ENCODE measurements at regions of chr12 and their contacts with region 1.

Region 1: DNA sequence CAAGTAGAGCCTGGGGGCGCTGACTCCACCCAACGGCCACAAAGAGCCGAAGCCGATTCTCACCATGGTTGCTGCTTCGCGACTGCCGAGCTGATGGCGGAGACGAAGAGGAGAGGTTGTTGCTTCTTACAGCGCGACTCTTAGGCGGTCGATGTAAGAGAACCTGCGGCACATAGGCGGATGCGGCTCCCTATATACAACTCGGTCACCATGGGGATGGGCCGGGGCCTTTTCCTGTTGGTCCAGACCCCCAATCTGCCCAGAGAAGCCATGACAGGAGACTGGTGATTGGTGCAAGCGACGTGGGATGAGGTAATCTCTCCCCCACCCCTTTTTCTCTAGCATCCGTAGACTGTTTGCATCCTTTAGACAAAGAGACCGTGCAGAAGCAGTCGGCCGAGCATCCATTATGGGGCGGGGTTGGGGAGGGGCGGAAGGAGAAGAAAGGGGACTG is at the start of gene TUBA1A:
- DNase-seq: peak; percentile 87
- ATAC-seq: peak; percentile 90
- H3K4me3 Mint-ChIP-seq: peak within 1 kb of the TSS; percentile 95
- H3K27ac Mint-ChIP-seq: peak within 1 kb of the TSS; percentile 98
- H3K4me1 Mint-ChIP-seq: peaks cover 16% of the 10 kb centered on the region
- H3K27me3 Mint-ChIP-seq: peaks cover 3% of the 10 kb centered on the region
- total RNA-seq, gene TUBA1A: 99.5 to 101 TPM

Region 2: DNA sequence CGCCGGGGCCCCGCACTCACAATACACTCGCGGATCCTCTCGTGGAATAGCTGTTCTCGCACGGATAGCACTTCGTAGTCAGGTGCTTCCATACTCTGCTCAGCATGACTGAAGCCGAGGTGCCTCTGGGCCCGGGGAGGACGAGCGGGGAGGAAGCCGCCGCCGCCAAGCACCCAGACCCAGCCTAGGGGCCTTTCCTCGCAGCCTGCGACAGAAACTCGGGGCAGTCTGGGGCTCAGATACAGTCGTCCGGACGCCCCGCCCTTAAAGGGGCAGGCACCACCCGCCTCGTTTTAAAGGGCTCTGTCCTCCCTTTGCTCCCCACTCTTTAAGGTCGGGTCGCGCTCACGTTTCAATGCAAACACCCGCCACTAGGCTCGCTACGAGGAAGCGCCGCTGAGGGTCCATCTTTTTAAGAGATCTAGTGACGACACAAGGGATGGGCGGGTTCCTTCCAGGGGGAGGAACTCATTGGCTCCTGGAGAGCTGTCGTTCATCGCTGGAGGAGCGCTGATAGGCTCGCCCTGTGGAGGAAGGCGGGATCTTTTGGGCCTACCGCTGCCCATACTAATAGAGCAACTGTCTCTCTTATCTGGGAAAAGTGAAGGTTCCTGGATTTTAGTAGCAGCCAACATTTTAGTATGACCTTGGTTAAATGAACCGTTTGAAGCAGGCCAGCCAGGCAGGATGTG is 78.3 kb before region 1 on chr12 and contains the start of gene LMBR1L:
- POLR2A ChIA-PET with region 1: interaction called, 19 read pairs
- DNase-seq: peak; percentile 87
- ATAC-seq: peak; percentile 98
- H3K4me3 Mint-ChIP-seq: peak within 1 kb of the TSS; percentile 96
- H3K27ac Mint-ChIP-seq: peak within 1 kb of the TSS; percentile 94
- H3K4me1 Mint-ChIP-seq: peaks cover 23% of the 10 kb centered on the region
- H3K27me3 Mint-ChIP-seq: no peaks in the 10 kb centered on the region
- total RNA-seq, gene LMBR1L: 111 to 112 TPM

Region 3: DNA sequence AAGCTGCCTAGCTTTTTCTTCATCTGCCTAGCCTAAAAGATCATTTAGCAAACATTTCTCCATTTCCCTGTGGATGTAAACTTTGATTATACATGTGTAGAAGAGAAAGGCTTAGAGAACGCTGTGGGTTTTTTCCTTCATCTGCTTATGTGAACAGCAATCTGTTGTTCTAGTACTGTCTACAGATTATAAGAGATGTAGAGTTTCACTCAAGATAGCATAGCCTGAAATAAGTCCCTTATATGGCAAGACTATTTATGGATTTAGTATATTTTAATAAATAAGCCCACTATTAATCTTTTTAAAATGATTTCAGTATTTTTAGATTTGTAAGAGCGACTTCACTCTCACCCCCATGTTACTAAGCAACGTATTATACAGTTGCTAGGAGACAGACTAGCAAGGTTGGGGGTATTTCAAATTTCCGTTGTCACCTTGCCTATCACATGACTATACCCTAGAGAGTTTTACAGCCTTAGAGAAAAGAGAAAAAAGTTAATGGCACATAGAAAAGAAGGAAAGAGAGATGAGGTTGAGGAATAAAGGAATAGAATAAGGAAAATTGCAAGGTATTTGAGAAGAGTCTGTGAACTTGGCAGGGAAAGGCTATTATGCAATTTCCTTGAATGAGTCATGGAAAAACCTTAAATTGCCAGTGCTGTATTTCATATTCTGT is 12.1 kb after region 1 on chr12:
- POLR2A ChIA-PET with region 1: interaction called, 24 read pairs
- DNase-seq: no peak
- ATAC-seq: peak; percentile 80
- H3K4me3 Mint-ChIP-seq: peak overlapping the region; percentile 2
- H3K27ac Mint-ChIP-seq: no peak overlapping the region
- H3K4me1 Mint-ChIP-seq: peaks cover 11% of the 10 kb centered on the region
- H3K27me3 Mint-ChIP-seq: peaks cover 6% of the 10 kb centered on the region

Region 4: DNA sequence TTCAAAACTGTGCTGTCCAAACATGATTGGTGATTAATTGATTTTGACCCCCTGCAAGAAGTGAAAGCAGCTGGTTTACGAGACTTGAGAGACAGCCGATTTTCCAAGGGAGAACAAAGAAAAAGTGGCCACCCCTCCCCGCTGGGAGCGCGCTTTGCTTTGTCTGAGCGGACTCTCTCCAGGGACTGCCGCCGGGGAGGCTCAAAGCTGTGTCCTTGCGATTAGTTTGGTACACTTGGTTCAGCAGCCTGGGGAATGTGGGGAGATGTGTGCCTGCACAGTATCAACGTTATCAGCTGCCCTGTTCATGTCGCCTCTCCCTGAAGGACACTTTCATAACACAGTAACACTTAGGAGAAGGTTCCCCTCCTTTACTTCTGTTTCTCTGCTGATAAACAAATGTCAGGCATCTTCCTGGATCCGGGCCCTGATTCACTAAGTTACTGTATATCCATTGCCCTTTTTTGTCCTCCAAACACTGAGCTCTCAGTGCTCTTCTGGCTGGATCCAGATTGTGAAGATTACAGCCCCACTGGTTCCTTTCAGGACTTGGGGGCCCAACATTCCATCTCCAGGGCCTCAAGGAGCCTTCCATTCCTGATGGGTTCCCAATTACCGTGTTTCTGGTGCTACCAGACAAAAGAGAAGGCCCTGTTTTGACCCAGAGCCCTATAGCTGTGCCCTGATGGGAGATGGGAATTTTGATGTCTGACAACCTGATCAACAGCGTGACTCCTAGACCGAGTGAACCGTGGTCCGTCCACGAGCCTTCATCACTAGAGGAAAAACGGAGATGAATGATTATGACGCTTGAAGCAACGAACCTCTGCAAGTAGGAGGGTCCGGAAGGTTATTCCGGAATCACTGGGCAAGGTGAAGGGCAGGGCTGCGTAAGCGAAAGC is 44.2 kb after region 1 on chr12:
- POLR2A ChIA-PET with region 1: interaction called, 19 read pairs
- DNase-seq: no peak
- ATAC-seq: no peak
- H3K4me3 Mint-ChIP-seq: no peak overlapping the region
- H3K27ac Mint-ChIP-seq: peak overlapping the region; percentile 66
- H3K4me1 Mint-ChIP-seq: peaks cover 6% of the 10 kb centered on the region
- H3K27me3 Mint-ChIP-seq: peaks cover 4% of the 10 kb centered on the region

Region 5: GRCh38 chr12:49264738-49265515 is 76.0 kb after region 1 on chr12 and contains the start of gene TUBA1C:
- POLR2A ChIA-PET with region 1: interaction called, 28 read pairs
- DNase-seq: peak; percentile 97
- ATAC-seq: peak; percentile 85
- H3K4me3 Mint-ChIP-seq: peak within 1 kb of the TSS; percentile 99
- H3K27ac Mint-ChIP-seq: peak within 1 kb of the TSS; percentile 98
- H3K4me1 Mint-ChIP-seq: peaks cover 30% of the 10 kb centered on the region
- H3K27me3 Mint-ChIP-seq: no peaks in the 10 kb centered on the region
- total RNA-seq, gene TUBA1C: 162 to 168 TPM